T-cell (primary cell): ENCODE measurements at regions of chr15 and their contacts with region 1.

Region 1: GRCh38 chr15:67240235-67241131 is 14.0 kb downstream of the AAGAB start:
- DNase-seq: peak in 19 of 35 experiments; percentile 6 to 58 (median 15)
- ATAC-seq: peak; percentile 62 to 74 (median 69)
- H3K4me3 ChIP-seq: no peak overlapping the region
- H3K4me3 Mint-ChIP-seq: peak overlapping the region; percentile 21 to 50 (median 42)
- H3K27ac ChIP-seq: peak overlapping the region; percentile 59
- H3K27ac Mint-ChIP-seq: peak overlapping the region; percentile 64 to 89
- H3K4me1 ChIP-seq: peaks cover 3 to 15% of the 10 kb centered on the region in 2 experiments
- H3K4me1 Mint-ChIP-seq: peaks cover 59 to 67% (median 62%) of the 10 kb centered on the region in 3 donors
- H3K27me3 ChIP-seq: no peaks in the 10 kb centered on the region
- H3K27me3 Mint-ChIP-seq: no peaks in the 10 kb centered on the region

Region 2: GRCh38 chr15:67254238-67255175 is 14.0 kb after region 1 on chr15 and contains the starts of genes AAGAB and IQCH:
- CTCF ChIA-PET with region 1: interaction called, 3 to 14 read pairs
- POLR2A ChIA-PET with region 1: no interaction called
- DNase-seq: peak; percentile 76 to 99 (median 87)
- ATAC-seq: peak; percentile 88 to 95 (median 94)
- H3K4me3 ChIP-seq: peak within 1 kb of the TSS; percentile 86 to 99
- H3K4me3 Mint-ChIP-seq: peak within 1 kb of the TSS; percentile 82 to 99 (median 98)
- H3K27ac ChIP-seq: peak within 1 kb of the TSS; percentile 81
- H3K27ac Mint-ChIP-seq: peak within 1 kb of the TSS; percentile 92 to 95
- H3K4me1 ChIP-seq: peaks cover 6 to 17% of the 10 kb centered on the region in 2 experiments
- H3K4me1 Mint-ChIP-seq: peaks cover 39 to 49% (median 45%) of the 10 kb centered on the region in 3 donors
- H3K27me3 ChIP-seq: no peaks in the 10 kb centered on the region
- H3K27me3 Mint-ChIP-seq: no peaks in the 10 kb centered on the region
- total RNA-seq, gene AAGAB: 21.9 to 28.4 (median 23.6) TPM
- total RNA-seq, gene IQCH: 0.43 to 2.6 (median 1.3) TPM

Region 3: GRCh38 chr15:67280217-67280616 is 39.7 kb after region 1 on chr15:
- CTCF ChIA-PET with region 1: interaction called in 1 of 2 experiments, 4 read pairs
- POLR2A ChIA-PET with region 1: interaction called in 1 of 2 experiments, 11 read pairs
- DNase-seq: no peak
- ATAC-seq: no peak
- H3K4me3 ChIP-seq: no peak overlapping the region
- H3K4me3 Mint-ChIP-seq: no peak overlapping the region
- H3K27ac ChIP-seq: no peak overlapping the region
- H3K27ac Mint-ChIP-seq: no peak overlapping the region
- H3K4me1 ChIP-seq: no peaks in the 10 kb centered on the region
- H3K4me1 Mint-ChIP-seq: no peaks in the 10 kb centered on the region
- H3K27me3 ChIP-seq: no peaks in the 10 kb centered on the region
- H3K27me3 Mint-ChIP-seq: no peaks in the 10 kb centered on the region

Region 4: DNA sequence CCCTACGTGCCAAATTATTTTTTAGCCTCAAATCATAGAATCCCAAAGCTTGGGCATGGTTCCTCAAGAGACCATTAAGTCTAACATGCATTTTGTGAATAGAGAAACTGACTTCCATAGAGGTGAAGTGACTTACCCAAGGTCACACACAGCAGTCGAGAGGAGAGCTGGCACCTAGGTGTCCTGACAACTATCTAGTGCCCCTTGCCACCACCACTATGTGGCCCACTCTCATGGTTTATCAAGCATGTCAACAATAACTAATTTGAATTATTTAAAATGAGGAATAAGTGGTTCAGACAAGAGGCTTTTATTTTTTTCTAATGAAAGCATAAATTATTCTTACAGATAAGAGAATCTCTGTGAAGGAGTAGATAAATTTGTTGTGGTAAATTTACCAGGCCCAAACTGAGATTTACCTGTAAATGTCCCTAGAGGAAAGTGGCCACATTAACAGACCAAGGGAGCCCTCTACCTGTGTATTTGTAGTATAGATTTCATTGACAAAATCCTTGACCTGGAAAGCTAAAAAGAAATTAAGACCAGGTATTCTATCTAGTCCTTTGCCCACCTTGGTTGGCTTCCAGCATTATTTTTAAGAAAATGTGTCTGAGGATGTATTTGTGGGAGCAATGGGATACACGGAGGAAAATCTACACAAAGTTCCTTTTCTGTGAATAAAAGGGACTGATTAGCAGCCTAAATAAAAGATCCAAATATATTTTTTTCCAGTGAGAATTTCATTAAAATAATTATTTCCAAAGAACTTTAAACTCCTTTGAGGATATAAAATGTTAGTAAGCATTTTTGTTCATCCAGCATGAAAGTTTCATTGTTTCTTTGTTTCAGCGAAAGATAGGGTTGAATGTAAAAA is 63.2 kb after region 1 on chr15:
- CTCF ChIA-PET with region 1: interaction called in 1 of 2 experiments, 16 read pairs
- POLR2A ChIA-PET with region 1: no interaction called
- DNase-seq: peak in 21 of 35 experiments; percentile 1 to 73 (median 9)
- ATAC-seq: peak in 3 of 4 experiments; percentile 50 to 62 (median 57)
- H3K4me3 ChIP-seq: no peak overlapping the region
- H3K4me3 Mint-ChIP-seq: no peak overlapping the region
- H3K27ac ChIP-seq: no peak overlapping the region
- H3K27ac Mint-ChIP-seq: no peak overlapping the region
- H3K4me1 ChIP-seq: no peaks in the 10 kb centered on the region
- H3K4me1 Mint-ChIP-seq: no peaks in the 10 kb centered on the region
- H3K27me3 ChIP-seq: no peaks in the 10 kb centered on the region
- H3K27me3 Mint-ChIP-seq: no peaks in the 10 kb centered on the region

Region 5: DNA sequence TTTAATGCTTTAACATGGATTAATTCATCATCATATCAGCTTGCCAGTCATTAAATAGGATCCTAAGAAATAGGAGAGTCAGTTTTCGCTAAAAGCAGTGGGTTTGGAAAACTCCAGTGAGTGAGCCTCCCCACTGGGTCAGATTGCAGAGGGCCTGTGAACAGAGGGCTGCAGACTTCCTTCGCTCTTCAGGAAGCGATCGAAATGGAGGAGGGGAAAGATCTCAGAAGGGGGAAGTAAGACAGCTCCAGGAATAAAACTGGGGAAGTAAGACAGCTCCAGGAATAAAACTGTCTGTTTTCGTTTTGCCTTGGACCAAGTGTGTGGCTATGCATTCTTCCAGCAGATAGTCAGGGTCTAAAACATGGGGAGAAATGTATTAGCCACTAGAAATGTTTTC is 155.6 kb after region 1 on chr15:
- CTCF ChIA-PET with region 1: no interaction called
- POLR2A ChIA-PET with region 1: no interaction called
- DNase-seq: no peak
- ATAC-seq: no peak
- H3K4me3 ChIP-seq: no peak overlapping the region
- H3K4me3 Mint-ChIP-seq: no peak overlapping the region
- H3K27ac ChIP-seq: no peak overlapping the region
- H3K27ac Mint-ChIP-seq: no peak overlapping the region
- H3K4me1 ChIP-seq: no peaks in the 10 kb centered on the region
- H3K4me1 Mint-ChIP-seq: no peaks in the 10 kb centered on the region
- H3K27me3 ChIP-seq: no peaks in the 10 kb centered on the region
- H3K27me3 Mint-ChIP-seq: peaks cover 0 to 5% of the 10 kb centered on the region in 2 donors